Heart left ventricle (tissue), 16 donors: ENCODE measurements at regions of chr6 and their contacts with region 1.

Region 1: GRCh38 chr6:53484476-53485280 is 60.2 kb downstream of the GCLC start:
- DNase-seq: peak in 4 of 5 donors; percentile 45 to 68 (median 58)
- ATAC-seq: peak; percentile 73 to 85 (median 78)
- H3K4me3 ChIP-seq: peak overlapping the region in 5 of 12 donors; percentile 1 to 40 (median 32)
- H3K27ac ChIP-seq: peak overlapping the region; percentile 27 to 81 (median 70)
- H3K4me1 ChIP-seq: peaks cover 0 to 29% (median 16%) of the 10 kb centered on the region in 12 donors
- H3K27me3 ChIP-seq: no peaks in the 10 kb centered on the region
- CTCF ChIP-seq: peak; percentile 91 to 99 (median 97)
- POLR2A ChIP-seq: no peak

Region 2: DNA sequence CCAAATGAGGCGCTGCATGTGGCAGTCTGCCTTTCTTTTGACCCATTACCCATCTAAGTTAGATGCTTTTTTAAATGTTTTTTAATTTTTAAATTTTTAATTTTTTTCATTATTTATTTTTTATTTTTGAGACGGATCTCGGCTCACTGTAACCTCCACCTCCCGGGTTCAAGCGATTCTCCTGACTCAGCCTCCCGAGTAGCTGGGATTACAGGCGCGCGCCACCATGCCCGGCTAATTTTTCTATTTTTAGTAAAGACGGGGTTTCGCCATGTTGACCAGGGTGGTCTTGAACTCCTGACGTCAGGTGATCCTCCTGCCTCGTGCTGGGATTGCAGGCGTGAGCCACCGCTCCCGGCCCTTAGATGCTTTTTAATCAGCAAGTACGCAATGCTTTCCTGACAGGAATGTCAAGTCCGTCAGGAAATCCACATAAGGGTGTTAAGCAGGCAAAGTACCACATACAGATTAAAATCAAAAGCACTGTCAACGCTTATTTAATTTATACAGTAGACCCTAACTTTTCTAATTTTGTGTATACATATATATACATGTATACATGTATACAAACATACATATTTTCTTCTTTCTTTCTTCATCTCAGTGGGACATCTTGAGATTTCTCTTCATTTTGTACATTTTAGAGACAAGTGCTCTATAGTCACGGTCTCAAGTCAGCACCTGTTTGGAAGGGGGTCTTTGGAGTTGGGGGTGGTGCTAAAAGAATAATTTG is 488.6 kb before region 1 on chr6:
- intact Hi-C with region 1: loop called in 2 of 10 experiments (anchors 10 kb)
- DNase-seq: peak in 4 of 5 donors; percentile 44 to 51 (median 45)
- ATAC-seq: peak in 2 of 4 donors; percentile 4 to 7
- H3K4me3 ChIP-seq: peak overlapping the region in 10 of 12 donors; percentile 26 to 80 (median 58)
- H3K27ac ChIP-seq: peak overlapping the region in 11 of 12 donors; percentile 58 to 98 (median 91)
- H3K4me1 ChIP-seq: peaks cover 0 to 25% (median 15%) of the 10 kb centered on the region in 12 donors
- H3K27me3 ChIP-seq: no peaks in the 10 kb centered on the region
- CTCF ChIP-seq: no peak
- POLR2A ChIP-seq: no peak

Region 3: GRCh38 chr6:53273370-53273769 is 211.3 kb before region 1 on chr6:
- intact Hi-C with region 1: loop called in 2 of 10 experiments (anchors 10 kb)
- DNase-seq: no peak
- ATAC-seq: no peak
- H3K4me3 ChIP-seq: no peak overlapping the region
- H3K27ac ChIP-seq: no peak overlapping the region
- H3K4me1 ChIP-seq: peaks cover 0 to 16% (median 2%) of the 10 kb centered on the region in 12 donors
- H3K27me3 ChIP-seq: no peaks in the 10 kb centered on the region
- CTCF ChIP-seq: no peak
- POLR2A ChIP-seq: no peak

Region 4: GRCh38 chr6:53294095-53294494 is 190.6 kb before region 1 on chr6:
- intact Hi-C with region 1: loop called in 3 of 10 experiments (anchors 5 to 10 kb)
- DNase-seq: no peak
- ATAC-seq: peak in 1 of 4 donors; percentile 41
- H3K4me3 ChIP-seq: no peak overlapping the region
- H3K27ac ChIP-seq: no peak overlapping the region
- H3K4me1 ChIP-seq: peaks cover 0 to 53% (median 26%) of the 10 kb centered on the region in 12 donors
- H3K27me3 ChIP-seq: no peaks in the 10 kb centered on the region
- CTCF ChIP-seq: peak; percentile 37 to 65 (median 46)
- POLR2A ChIP-seq: no peak

Region 5: GRCh38 chr6:53348371-53349208 is 136.1 kb before region 1 on chr6 and contains the start of gene ELOVL5:
- intact Hi-C with region 1: loop called in 6 of 10 experiments (anchors 5 to 10 kb)
- DNase-seq: peak; percentile 98 to 99 (median 99)
- ATAC-seq: peak; percentile 87 to 96 (median 94)
- H3K4me3 ChIP-seq: peak within 1 kb of the TSS; percentile 75 to 98 (median 90)
- H3K27ac ChIP-seq: peak within 1 kb of the TSS; percentile 89 to 100 (median 97)
- H3K4me1 ChIP-seq: peaks cover 3 to 42% (median 15%) of the 10 kb centered on the region in 12 donors
- H3K27me3 ChIP-seq: no peaks in the 10 kb centered on the region
- CTCF ChIP-seq: peak in 4 of 12 donors; percentile 7 to 14 (median 10)
- POLR2A ChIP-seq: peak; percentile 34 to 88
- total RNA-seq, gene ELOVL5: 17.3 to 47.9 (median 29.3) TPM

Region 6: GRCh38 chr6:53410508-53411258 is 74.0 kb before region 1 on chr6:
- intact Hi-C with region 1: loop called in 6 of 10 experiments (anchors 1 to 10 kb)
- DNase-seq: peak; percentile 23 to 68 (median 39)
- ATAC-seq: peak; percentile 75 to 90 (median 84)
- H3K4me3 ChIP-seq: no peak overlapping the region
- H3K27ac ChIP-seq: no peak overlapping the region
- H3K4me1 ChIP-seq: peaks cover 0 to 5% (median 0%) of the 10 kb centered on the region in 12 donors
- H3K27me3 ChIP-seq: no peaks in the 10 kb centered on the region
- CTCF ChIP-seq: peak; percentile 52 to 82 (median 70)
- POLR2A ChIP-seq: no peak

Region 7: GRCh38 chr6:53446151-53446550 is 38.5 kb before region 1 on chr6:
- intact Hi-C with region 1: no loop called
- DNase-seq: no peak
- ATAC-seq: no peak
- H3K4me3 ChIP-seq: no peak overlapping the region
- H3K27ac ChIP-seq: no peak overlapping the region
- H3K4me1 ChIP-seq: peaks cover 0 to 13% (median 0%) of the 10 kb centered on the region in 12 donors
- H3K27me3 ChIP-seq: no peaks in the 10 kb centered on the region
- CTCF ChIP-seq: no peak
- POLR2A ChIP-seq: no peak

Region 8: DNA sequence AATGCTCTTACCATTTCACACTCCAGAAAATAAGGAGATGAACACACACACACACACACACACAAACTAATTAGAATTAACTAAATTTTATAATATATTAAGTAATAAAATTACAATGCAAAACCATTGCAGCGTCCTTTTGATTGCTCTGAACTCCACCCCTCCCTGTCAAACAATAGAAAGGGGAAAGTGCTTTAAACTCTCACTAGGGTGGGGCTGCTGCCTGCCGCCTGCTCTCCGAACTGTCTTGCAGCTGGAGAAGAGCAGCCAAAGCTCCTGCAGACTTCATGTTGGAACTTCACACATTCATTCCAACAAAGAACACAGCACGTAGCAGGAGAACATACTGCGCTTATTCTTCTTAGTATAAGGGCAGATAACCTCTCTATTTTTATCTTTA is 23.0 kb before region 1 on chr6:
- intact Hi-C with region 1: loop called in 1 of 10 experiments (anchors 2 kb)
- DNase-seq: peak in 1 of 5 donors; percentile 35
- ATAC-seq: peak in 2 of 4 donors; percentile 53 to 70
- H3K4me3 ChIP-seq: no peak overlapping the region
- H3K27ac ChIP-seq: peak overlapping the region in 2 of 12 donors; percentile 59 to 62
- H3K4me1 ChIP-seq: peaks cover 0 to 46% (median 5%) of the 10 kb centered on the region in 12 donors
- H3K27me3 ChIP-seq: no peaks in the 10 kb centered on the region
- CTCF ChIP-seq: no peak
- POLR2A ChIP-seq: no peak